ENCODE measurements at regions of chr7 and their contacts with region 1.

Region 1: GRCh38 chr7:143321734-143322133 is 5.8 kb downstream of the CLCN1 start:
- DNase-seq: peak in 4 of 10 donors; percentile 19 to 87 (median 42)

Region 2: DNA sequence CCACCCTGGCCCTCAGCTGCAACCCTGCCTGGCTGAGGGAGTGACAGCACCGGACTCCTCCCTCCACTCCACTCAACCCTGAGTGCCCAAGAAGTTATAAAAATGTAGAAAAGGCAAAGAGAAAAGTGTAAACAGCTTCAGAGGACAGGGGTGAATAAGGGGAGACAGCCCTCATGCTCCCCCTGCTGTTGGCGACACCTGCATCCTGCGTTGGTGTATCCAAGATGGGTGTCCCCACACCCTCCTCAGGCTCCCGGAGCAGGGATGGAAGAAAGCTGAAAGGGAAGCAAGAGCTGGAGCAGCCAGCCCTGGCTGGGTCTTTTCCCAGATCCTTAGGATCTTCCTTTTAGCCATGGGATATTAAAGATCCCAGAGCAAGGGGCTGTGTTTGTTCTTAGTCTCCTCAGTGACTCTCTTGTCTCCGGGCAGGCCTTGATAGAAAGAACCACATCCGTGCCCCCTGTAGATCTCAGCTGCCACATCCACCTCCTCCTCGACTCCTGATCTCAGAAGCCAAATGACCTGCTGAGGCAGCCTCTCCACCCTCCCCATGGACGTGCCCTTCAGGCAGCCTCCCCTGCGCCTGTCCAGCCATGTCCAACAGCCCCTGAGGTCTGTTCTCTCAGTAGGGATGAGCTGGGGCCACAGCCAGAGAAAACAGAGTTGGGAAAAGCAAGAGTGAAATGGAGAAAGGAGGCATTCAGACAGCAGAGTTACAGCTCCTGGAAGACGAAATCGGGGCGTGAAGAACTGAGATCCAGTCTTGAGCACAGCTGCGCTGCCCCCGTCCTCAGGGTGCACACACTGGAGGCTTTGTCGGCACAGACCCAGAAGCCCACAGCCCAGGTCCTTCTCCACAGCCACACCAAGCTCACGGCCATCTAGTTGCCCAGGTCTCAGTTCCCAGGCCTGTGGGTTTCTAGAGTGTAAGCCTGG is 34.0 kb after region 1 on chr7:
- intact Hi-C with region 1: loop called (anchors 5 kb)
- DNase-seq: peak in 1 of 10 donors; percentile 67

Measured in posterior cingulate gyrus (tissue), 11 donors.